Transverse colon (tissue), 4 donors: ENCODE measurements at regions of chr1 and their contacts with region 1.

Region 1: DNA sequence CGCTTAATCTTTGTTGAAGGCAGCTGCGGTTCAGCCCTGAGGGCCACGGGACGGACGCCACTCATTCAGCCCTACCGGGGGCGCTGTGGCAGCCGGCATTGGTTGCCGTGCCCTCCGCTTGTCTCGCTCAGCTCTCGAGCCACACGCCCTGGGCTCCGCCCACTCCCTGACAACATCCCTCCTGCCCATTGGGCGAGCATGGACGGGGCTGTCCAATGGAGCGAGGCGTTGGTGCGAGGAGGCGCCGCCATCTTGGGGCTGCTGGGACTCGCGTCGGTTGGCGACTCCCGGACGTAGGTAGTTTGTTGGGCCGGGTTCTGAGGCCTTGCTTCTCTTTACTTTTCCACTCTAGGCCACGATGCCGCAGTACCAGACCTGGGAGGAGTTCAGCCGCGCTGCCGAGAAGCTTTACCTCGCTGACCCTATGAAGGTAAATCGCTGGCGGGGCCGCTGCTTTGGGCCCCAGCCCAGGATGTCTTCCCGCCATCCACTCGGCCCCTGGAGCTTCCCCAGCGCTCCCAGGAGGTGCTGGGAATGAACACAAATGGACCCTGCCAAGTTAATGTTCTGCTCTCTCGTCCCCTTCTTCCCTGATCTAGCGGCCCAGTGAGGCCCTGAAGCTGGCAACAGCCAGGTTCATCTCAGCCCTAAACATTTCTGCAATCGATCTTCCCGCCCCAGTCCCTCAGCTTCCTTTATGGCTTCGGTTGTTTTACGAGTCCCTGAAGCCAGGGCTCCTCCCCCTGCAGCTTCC is at the start of gene SRP9:
- DNase-seq: peak; percentile 99
- H3K4me3 ChIP-seq: peak within 1 kb of the TSS; percentile 51 to 77 (median 74)
- H3K27ac ChIP-seq: peak within 1 kb of the TSS; percentile 95 to 98 (median 97)
- H3K4me1 ChIP-seq: peaks cover 2 to 57% (median 42%) of the 10 kb centered on the region in 4 donors
- H3K27me3 ChIP-seq: no peaks in the 10 kb centered on the region
- CTCF ChIP-seq: peak; percentile 68 to 97 (median 88)
- EP300 ChIP-seq: no peak
- POLR2A ChIP-seq: peak; percentile 92
- total RNA-seq, gene SRP9: 42.3 to 208 (median 117) TPM

Region 2: DNA sequence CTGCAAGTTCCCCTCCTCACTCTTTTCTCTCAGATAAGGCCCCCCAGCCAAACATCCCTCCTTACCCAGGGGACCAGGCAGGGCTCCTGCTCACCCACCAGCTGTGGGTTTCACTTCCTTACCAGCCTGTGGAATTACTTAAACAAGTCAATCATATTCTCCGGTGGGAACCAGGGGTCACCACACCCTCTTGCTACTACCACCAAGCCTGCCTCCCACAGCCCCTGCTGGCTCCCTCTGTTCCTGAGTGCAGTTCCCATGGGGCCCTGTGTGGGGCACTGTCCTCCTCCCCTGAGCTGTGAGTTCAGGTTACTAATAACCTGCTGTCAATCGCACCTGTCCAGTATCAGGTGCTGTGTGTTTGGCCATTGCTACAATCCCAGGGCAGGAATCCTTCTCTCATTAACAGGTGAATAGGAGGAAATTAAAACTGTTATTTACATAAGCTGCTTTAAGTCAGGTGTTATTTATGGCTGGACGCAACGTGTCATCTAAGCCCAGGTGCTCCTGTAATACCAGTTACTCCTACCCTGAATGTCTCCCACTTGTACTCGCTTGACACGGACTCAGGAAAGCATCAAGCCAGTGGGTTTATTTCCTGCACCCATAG is 296.8 kb before region 1 on chr1:
- in situ Hi-C with region 1: loop called in 2 of 4 experiments (anchors 10 to 25 kb)
- intact Hi-C with region 1: no loop called
- DNase-seq: peak; percentile 79
- H3K4me3 ChIP-seq: no peak overlapping the region
- H3K27ac ChIP-seq: peak overlapping the region in 2 of 4 donors; percentile 5 to 59
- H3K4me1 ChIP-seq: peaks cover 0 to 23% (median 8%) of the 10 kb centered on the region in 4 donors
- H3K27me3 ChIP-seq: no peaks in the 10 kb centered on the region
- CTCF ChIP-seq: peak; percentile 84 to 88 (median 86)
- EP300 ChIP-seq: no peak
- POLR2A ChIP-seq: no peak

Region 3: DNA sequence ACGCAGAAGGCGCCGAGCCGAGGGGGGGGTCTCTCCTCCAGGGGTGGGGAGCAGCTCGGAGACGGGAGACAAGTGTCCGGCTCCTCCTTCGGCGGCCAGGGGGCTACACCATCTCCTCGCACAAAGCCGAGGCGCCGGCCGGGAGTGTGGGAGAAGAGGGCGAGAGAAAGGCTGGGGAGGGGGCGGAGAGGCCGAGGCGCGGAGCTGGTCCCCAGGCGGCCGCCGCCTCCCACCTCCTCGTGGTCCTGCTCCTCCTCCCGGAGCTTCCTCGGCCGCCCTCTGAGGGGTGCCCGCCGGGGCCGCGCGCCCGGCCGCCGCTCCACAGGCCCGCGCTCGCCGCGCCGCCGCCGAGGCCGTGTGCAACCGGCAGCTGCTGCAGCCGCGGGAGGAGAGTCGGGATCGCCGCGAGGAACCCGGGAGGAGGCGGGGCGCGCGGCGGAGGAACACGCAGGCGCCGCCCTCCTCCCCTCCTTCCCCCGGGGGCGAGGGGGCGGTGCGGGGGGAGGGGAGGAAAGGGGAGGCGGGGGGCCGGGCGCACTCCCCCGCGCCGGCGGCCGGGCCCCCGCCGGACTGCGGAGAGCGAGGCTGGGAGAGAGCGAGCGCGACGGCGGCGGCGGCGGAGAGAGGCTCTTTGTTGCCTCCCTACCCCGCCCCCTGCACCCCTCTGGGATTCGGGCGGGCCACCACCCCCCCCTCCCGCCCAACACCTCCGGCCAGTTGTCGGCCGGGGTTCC is 124.9 kb before region 1 on chr1 and contains the start of gene ENAH:
- in situ Hi-C with region 1: no loop called
- intact Hi-C with region 1: loop called (anchors 5 kb)
- DNase-seq: peak; percentile 78
- H3K4me3 ChIP-seq: peak within 1 kb of the TSS; percentile 63 to 97 (median 84)
- H3K27ac ChIP-seq: peak within 1 kb of the TSS; percentile 91 to 95 (median 94)
- H3K4me1 ChIP-seq: peaks cover 0 to 34% (median 6%) of the 10 kb centered on the region in 4 donors
- H3K27me3 ChIP-seq: no peaks in the 10 kb centered on the region
- CTCF ChIP-seq: no peak
- EP300 ChIP-seq: no peak
- POLR2A ChIP-seq: no peak
- total RNA-seq, gene ENAH: 14.7 to 140 (median 33.9) TPM

Region 4: GRCh38 chr1:225845571-225846259 is 68.0 kb after region 1 on chr1:
- in situ Hi-C with region 1: no loop called
- intact Hi-C with region 1: loop called (anchors 10 kb)
- DNase-seq: peak; percentile 74
- H3K4me3 ChIP-seq: no peak overlapping the region
- H3K27ac ChIP-seq: peak overlapping the region in 3 of 4 donors; percentile 37 to 52 (median 38)
- H3K4me1 ChIP-seq: peaks cover 0 to 21% (median 18%) of the 10 kb centered on the region in 4 donors
- H3K27me3 ChIP-seq: no peaks in the 10 kb centered on the region
- CTCF ChIP-seq: peak; percentile 58 to 71 (median 64)
- EP300 ChIP-seq: no peak
- POLR2A ChIP-seq: no peak

Region 5: DNA sequence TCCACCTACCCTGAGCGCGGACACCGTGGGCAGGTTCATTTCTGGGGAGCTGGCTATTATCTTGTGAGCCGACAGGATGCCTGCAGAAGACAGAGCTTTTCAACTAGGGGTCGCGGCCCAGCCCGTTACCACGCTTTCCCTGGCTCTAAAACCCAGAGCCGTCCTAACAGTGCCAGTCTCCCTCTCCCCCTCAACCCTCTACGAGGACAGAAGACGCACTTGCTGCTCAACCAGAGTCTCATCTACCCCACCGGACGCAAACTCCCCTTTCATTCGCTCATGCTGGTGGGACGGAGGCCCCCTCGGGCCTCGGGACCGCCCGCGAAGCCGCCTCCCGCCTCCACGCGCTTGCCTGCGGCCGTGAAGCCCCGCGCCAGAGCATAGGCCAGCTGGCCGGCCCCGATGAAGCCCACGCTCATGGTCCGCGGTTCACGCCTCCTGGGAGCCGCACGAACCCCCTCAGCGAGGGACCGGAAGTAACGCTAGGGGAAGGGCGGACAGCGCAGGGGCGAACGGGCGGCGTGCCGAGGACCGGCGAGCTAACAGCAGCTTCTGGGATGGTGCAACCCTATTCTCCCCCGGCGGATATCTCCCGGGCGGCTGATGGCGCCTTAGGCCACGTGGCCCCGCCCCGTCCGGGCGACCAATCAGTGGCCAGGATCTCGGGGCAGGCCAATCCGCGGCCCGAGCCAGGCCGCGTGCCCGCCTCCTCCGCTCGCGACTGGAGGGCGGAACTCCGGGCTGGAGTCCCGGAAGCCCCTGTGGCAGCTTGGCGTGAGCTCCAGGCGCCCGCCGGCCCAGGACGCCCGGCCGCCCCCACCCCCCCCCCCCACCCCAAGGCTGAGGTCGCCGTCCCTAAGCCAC is 146.2 kb after region 1 on chr1 and contains the start of gene PYCR2:
- in situ Hi-C with region 1: loop called in 2 of 4 experiments (anchors 10 to 25 kb)
- intact Hi-C with region 1: loop called (anchors 10 kb)
- DNase-seq: peak; percentile 96
- H3K4me3 ChIP-seq: peak within 1 kb of the TSS; percentile 63 to 91 (median 86)
- H3K27ac ChIP-seq: peak within 1 kb of the TSS; percentile 91 to 98 (median 94)
- H3K4me1 ChIP-seq: peaks cover 9 to 32% (median 26%) of the 10 kb centered on the region in 4 donors
- H3K27me3 ChIP-seq: no peaks in the 10 kb centered on the region
- CTCF ChIP-seq: no peak
- EP300 ChIP-seq: no peak
- POLR2A ChIP-seq: peak; percentile 89
- total RNA-seq, gene PYCR2: 26.5 to 40.6 (median 32.2) TPM